ENCODE measurements at regions of chr17 and their contacts with region 1.

Region 1: DNA sequence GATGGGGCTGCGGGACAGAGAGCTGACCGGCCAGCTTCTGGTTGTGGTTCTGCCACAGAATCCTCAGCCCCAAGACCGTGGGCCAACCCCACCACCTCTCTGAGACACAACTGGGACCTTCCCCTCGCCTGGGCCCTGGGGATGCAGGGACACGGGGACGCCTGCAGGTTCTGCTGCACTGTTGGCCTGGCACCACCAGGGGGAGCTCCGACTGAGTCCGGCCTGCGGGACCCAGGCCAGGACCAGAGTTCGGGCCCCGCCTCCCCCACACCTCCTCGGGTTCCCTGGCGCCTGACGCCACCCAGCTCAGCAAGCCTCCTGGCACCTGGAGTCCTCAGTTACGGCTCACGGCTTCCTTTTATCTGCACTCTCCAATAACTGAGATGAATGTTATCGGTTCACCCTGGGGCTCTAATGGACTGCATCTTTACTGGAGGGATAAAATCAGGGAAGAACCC is 27.3 kb downstream of the TBC1D16 start:
- DNase-seq: peak; percentile 94
- ATAC-seq: peak; percentile 87
- H3K4me3 Mint-ChIP-seq: no peak overlapping the region
- H3K27ac Mint-ChIP-seq: no peak overlapping the region
- H3K4me1 Mint-ChIP-seq: peaks cover 5% of the 10 kb centered on the region
- H3K27me3 Mint-ChIP-seq: no peaks in the 10 kb centered on the region
- CTCF ChIP-seq: peak; percentile 94

Region 2: GRCh38 chr17:79991140-79991923 is 17.1 kb before region 1 on chr17:
- CTCF ChIA-PET with region 1: interaction called, 42 read pairs
- POLR2A ChIA-PET with region 1: interaction called, 5 read pairs
- DNase-seq: peak; percentile 87
- ATAC-seq: peak; percentile 82
- H3K4me3 Mint-ChIP-seq: peak overlapping the region; percentile 29; the same call in 1 of the 2 replicates
- H3K27ac Mint-ChIP-seq: peak overlapping the region; percentile 79; the same call in 1 of the 2 replicates
- H3K4me1 Mint-ChIP-seq: peaks cover 58% of the 10 kb centered on the region
- H3K27me3 Mint-ChIP-seq: no peaks in the 10 kb centered on the region
- CTCF ChIP-seq: peak; percentile 15; the same call in 1 of the 2 replicates

Region 3: DNA sequence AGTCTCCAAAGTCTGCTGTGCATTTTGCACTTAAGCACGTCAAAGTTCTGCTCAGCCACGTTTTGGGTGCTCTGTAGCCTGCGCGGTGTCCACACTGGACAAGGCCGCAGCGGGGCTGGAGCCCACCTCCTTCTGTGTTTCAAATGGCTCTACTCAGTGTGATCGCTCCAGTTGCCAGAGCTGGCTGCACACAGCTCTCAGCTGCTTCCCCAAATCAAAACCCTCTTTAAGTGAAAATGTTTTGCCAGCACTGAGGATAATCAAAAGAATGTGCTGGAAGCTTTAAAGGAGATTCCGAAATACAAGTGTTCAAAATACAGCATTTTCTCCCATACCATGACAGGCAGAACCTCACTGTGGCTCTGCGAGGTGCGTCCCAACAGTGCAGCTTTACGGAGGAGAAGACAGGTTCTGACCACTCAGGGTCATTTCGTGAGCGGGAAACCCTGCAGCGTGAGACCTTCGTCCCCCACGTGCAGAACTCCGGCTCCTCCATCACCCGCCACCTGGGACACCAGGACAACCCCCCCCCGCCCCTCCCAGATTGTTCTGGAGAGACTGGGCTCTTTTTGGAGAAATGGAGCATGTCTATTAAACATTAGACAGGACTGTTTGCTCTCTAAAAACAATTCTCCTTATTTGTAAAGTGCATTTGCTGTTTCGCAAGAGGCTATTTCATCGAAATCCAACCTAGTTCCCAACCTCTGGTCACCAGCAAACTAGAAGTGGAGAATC is 10.7 kb after region 1 on chr17:
- CTCF ChIA-PET with region 1: interaction called, 23 read pairs
- POLR2A ChIA-PET with region 1: no interaction called
- DNase-seq: no peak
- ATAC-seq: no peak
- H3K4me3 Mint-ChIP-seq: no peak overlapping the region
- H3K27ac Mint-ChIP-seq: 0 out of 2 replicates have a peak overlapping the region, but pooled peaks have one; percentile 36
- H3K4me1 Mint-ChIP-seq: peaks cover 12% of the 10 kb centered on the region
- H3K27me3 Mint-ChIP-seq: no peaks in the 10 kb centered on the region
- CTCF ChIP-seq: no peak

Region 4: GRCh38 chr17:80082403-80083135 is 74.2 kb after region 1 on chr17:
- CTCF ChIA-PET with region 1: interaction called, 33 read pairs
- POLR2A ChIA-PET with region 1: no interaction called
- DNase-seq: peak; percentile 85
- ATAC-seq: peak; percentile 81
- H3K4me3 Mint-ChIP-seq: no peak overlapping the region
- H3K27ac Mint-ChIP-seq: no peak overlapping the region
- H3K4me1 Mint-ChIP-seq: peaks cover 8% of the 10 kb centered on the region; the same call in 1 of the 2 replicates
- H3K27me3 Mint-ChIP-seq: no peaks in the 10 kb centered on the region
- CTCF ChIP-seq: peak; percentile 40; the same call in 1 of the 2 replicates

Region 5: GRCh38 chr17:80124351-80124981 is 116.1 kb after region 1 on chr17:
- CTCF ChIA-PET with region 1: interaction called, 19 read pairs
- POLR2A ChIA-PET with region 1: no interaction called
- DNase-seq: peak; percentile 75
- ATAC-seq: peak; percentile 97
- H3K4me3 Mint-ChIP-seq: peak overlapping the region; percentile 21
- H3K27ac Mint-ChIP-seq: peak overlapping the region; percentile 67
- H3K4me1 Mint-ChIP-seq: peaks cover 23% of the 10 kb centered on the region
- H3K27me3 Mint-ChIP-seq: no peaks in the 10 kb centered on the region
- CTCF ChIP-seq: 0 out of 2 replicates have a peak, but pooled peaks have one; percentile 28

Measured in WTC11 (cell line).